ENCODE measurements at regions of chr7 and their contacts with region 1.

Region 1: DNA sequence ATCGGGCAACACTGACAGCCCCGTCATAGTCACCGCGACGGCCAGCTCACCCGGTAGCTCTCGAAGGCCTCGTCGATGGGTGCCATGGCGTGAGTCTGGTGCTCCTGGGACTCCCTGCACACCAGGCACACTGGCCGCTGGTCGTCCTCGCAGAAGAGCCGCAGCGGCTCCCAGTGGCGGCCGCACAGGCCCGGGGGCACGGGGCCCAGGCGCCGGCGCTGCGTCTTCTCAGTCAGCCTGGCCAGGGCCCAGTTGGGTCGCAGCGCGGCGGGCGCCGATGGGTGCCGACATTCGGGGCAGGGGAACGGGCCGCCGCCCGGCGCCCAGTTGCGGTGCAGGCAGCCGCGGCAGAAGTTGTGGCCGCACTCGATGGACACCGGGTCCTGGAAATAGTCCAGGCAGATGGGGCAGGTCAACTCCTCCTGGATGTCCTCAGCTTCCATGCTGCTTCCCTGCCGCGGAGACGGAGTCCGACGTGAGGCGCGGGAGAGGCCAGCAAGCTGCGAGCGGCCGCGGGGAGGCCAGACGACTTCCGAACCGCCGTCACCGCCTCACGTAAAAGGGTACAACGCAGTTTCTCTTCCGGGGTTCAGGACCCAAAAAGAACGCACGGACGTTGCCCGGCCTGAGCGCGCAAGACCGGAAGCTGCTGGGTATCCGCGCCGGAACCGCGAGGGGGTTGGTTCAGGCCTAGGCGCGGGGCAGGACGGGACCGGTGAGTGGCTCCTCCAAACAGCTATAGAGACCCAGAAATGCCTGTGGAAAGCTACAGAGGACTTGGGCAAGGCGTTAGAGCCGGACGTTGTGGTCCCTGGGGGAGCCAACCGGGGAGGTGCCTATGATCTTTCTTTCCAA is at the start of gene TRIM4:
- DNase-seq: peak; percentile 92
- H3K4me3 Mint-ChIP-seq: peak within 1 kb of the TSS; percentile 94
- H3K27ac Mint-ChIP-seq: peak within 1 kb of the TSS; percentile 96
- H3K4me1 Mint-ChIP-seq: peaks cover 44% of the 10 kb centered on the region
- H3K27me3 Mint-ChIP-seq: no peaks in the 10 kb centered on the region
- total RNA-seq, gene TRIM4: 22.1 and 24.1 TPM in 2 replicates

Region 2: GRCh38 chr7:99395616-99396327 is 523.4 kb before region 1 on chr7:
- intact Hi-C with region 1: no loop called
- DNase-seq: no peak
- H3K4me3 Mint-ChIP-seq: no peak overlapping the region
- H3K27ac Mint-ChIP-seq: no peak overlapping the region
- H3K4me1 Mint-ChIP-seq: peaks cover 17% of the 10 kb centered on the region
- H3K27me3 Mint-ChIP-seq: no peaks in the 10 kb centered on the region

Region 3: GRCh38 chr7:99465421-99465768 is 453.8 kb before region 1 on chr7:
- intact Hi-C with region 1: loop called (anchors 1 kb)
- DNase-seq: no peak
- H3K4me3 Mint-ChIP-seq: peak overlapping the region; percentile 91
- H3K27ac Mint-ChIP-seq: peak overlapping the region; percentile 73
- H3K4me1 Mint-ChIP-seq: peaks cover 27% of the 10 kb centered on the region
- H3K27me3 Mint-ChIP-seq: no peaks in the 10 kb centered on the region

Region 4: GRCh38 chr7:99558306-99559174 is 360.6 kb before region 1 on chr7 and contains the start of gene ZNF655:
- intact Hi-C with region 1: loop called (anchors 2 kb)
- DNase-seq: peak; percentile 89
- H3K4me3 Mint-ChIP-seq: peak within 1 kb of the TSS; percentile 100
- H3K27ac Mint-ChIP-seq: peak within 1 kb of the TSS; percentile 98
- H3K4me1 Mint-ChIP-seq: peaks cover 48% of the 10 kb centered on the region
- H3K27me3 Mint-ChIP-seq: no peaks in the 10 kb centered on the region
- total RNA-seq, gene ZNF655: 77.9 and 79.9 TPM in 2 replicates

Region 5: DNA sequence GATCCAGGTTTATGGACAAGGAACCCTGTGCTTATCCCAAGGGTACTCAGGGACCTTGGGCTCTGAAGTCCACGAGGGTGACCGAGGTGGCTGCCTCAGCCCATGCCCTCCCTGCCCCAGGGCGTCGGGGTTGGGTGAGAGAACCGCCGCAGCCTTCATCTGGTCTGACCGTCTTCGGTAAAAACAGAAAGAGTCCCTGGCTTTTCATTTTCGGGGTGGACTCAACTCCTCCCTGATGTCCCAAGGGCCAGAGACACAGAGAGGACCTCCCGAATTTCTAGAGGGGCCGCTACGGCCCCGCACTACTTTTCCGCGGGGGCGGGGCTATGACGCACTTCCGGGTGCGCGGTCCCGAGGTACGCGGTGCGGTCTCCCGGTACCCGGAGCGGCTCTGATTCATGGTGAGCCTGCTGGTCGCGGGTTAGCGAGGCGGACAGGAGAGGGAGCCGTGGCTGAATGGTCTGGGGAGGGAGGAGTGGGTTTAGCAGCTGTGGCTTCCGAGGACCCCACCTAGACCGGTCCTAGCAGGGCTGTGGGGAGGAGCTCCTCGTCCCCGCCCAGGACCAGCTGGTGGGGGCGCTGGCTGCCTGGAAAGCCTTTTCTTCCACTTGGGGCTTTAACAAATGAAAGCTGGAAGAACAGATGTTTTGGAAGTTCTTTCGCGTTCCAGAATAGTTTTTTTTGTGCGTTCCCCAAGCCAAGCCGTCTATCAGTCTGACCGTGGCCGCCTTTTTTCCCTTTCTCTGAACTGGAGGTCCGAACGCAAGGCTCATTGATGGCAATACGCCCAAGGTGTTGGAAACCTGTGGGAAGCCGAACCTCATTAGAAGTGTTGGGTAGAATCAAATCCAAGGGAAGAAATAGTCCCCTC is 130.5 kb after region 1 on chr7 and contains the start of gene ZSCAN21:
- intact Hi-C with region 1: loop called (anchors 2 kb)
- DNase-seq: peak; percentile 79
- H3K4me3 Mint-ChIP-seq: peak within 1 kb of the TSS; percentile 88
- H3K27ac Mint-ChIP-seq: peak within 1 kb of the TSS; percentile 92
- H3K4me1 Mint-ChIP-seq: peaks cover 13% of the 10 kb centered on the region
- H3K27me3 Mint-ChIP-seq: peaks cover 2% of the 10 kb centered on the region
- total RNA-seq, gene ZSCAN21: 6.8 and 9.8 TPM in 2 replicates

Region 6: GRCh38 chr7:100088621-100089457 is 169.7 kb after region 1 on chr7 and contains the start of gene COPS6:
- intact Hi-C with region 1: loop called (anchors 2 kb)
- DNase-seq: peak; percentile 82
- H3K4me3 Mint-ChIP-seq: peak within 1 kb of the TSS; percentile 90
- H3K27ac Mint-ChIP-seq: peak within 1 kb of the TSS; percentile 93
- H3K4me1 Mint-ChIP-seq: peaks cover 29% of the 10 kb centered on the region
- H3K27me3 Mint-ChIP-seq: peaks cover 6% of the 10 kb centered on the region
- total RNA-seq, gene COPS6: 101 and 115 TPM in 2 replicates

Region 7: DNA sequence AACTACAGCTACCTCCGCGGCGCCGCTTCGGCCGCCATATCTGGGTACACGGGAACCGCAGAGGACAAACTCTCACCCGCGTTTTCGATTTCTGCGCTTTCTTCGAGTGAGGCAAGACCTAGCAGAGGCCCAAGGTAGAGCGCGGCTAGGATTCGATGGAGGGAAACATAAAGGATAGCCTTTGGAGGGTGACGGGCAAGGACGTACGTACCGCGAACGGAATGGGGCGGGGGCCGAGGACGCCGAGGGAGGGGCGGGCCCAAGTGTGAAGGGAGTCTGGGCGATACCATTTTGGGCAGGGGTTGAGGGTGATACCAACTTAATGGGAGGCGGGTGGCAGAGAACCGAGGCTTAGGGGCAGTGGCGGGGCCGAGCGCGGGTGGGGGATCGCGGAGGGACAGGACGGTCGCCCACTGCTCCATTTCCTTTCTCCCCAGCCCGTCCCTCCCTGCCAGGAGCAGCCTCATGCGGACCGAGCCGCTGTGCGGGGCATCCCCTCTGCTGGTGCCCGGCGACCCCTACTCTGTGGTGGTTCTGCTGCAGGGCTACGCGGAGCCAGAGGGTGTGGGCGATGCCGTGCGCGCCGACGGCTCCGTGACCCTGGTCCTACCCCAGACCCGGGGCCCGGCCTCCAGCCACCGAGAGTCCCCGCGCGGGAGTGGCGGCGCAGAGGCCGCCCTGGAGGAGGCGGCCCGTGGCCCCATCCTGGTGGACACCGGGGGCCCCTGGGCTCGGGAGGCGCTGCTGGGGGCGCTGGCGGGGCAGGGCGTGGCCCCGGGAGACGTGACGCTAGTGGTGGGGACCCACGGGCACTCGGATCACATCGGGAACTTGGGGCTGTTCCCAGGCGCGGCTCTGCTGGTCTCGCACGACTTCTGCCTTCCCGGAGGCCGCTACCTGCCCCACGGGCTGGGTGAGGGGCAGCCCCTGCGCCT is 208.0 kb after region 1 on chr7 and contains the start of gene MBLAC1:
- intact Hi-C with region 1: loop called (anchors 2 kb)
- DNase-seq: peak; percentile 85
- H3K4me3 Mint-ChIP-seq: peak within 1 kb of the TSS; percentile 94
- H3K27ac Mint-ChIP-seq: peak within 1 kb of the TSS; percentile 95
- H3K4me1 Mint-ChIP-seq: peaks cover 20% of the 10 kb centered on the region
- H3K27me3 Mint-ChIP-seq: no peaks in the 10 kb centered on the region
- total RNA-seq, gene MBLAC1: 4.1 and 5.5 TPM in 2 replicates

Region 8: DNA sequence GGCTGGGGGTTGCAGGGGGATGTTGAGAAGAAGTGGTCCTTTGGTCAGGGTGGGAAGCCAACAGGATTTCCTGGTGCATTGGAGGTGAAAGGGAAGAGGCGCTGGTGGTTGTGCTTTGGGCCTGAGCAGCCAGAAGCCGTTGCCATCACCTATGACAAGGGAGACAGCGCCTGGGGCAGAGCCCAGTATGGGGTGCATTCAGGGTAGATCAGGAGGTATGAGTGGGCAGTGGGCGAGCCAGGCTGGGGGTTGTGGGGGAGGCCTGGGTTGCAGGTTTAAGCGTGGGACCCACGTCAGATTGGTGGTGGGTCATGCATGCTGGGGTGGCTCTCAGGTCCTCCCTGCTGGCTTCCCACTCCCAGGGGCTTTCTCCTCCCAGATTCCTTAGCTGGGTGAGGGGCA is 432.5 kb after region 1 on chr7:
- intact Hi-C with region 1: no loop called
- DNase-seq: no peak
- H3K4me3 Mint-ChIP-seq: peak overlapping the region; percentile 42
- H3K27ac Mint-ChIP-seq: peak overlapping the region; percentile 68
- H3K4me1 Mint-ChIP-seq: peaks cover 27% of the 10 kb centered on the region
- H3K27me3 Mint-ChIP-seq: no peaks in the 10 kb centered on the region

Measured in activated T-helper 1 cell treated with anti-CD3 and anti-CD28 coated beads, Interleukin-12 subunit alpha, Interleukin-12 subunit beta, Interleukin-2, Interleukin-4 antibody, amounts not matched to agents 30 ng/mL and 10 ng/mL and 1 ng/mL, durations not matched to agents 14 hours and 24 hours and 36 hours (primary cell).